ENCODE measurements at regions of chr11 and their contacts with region 1.

Region 1: DNA sequence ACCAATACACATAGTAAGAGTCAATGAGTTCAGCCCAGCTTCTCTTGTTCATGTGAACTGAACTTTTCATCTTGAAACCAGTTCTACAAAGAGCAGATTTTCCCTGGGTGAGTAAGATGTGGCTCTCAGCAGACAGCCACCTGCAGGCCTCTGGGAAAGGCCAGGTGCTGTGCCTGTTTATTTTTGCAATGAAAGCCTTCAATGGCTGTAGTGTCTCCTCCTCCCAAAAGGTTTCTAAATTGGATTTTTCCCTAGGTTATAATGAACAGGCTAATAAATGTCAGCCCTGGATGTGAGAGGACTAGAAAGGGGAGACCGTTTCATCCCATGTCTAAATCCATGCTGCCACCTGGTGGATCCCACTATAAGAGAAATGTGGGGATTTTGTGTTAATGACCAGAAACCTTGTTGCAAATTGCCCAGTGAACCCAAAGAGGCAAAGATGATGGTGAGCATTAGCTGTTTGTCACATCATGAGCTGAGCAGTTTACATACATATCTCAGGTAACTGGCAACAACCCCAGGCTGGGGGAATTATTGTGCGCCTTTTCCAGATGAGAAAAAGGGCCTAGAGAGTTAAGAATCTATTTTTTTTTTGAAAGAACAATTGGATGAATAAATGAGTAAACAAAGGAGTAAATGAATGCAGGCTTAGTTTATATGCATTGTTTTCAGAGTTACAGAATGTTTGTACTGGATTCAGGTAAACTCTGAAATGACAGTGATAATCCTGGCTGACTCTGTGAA is 12.7 kb downstream of the C11orf91 start:
- DNase-seq: peak in 5 of 10 donors; percentile 53 to 77 (median 64)
- H3K4me3 ChIP-seq: no peak overlapping the region
- H3K27ac ChIP-seq: no peak overlapping the region
- H3K27me3 ChIP-seq: no peaks in the 10 kb centered on the region
- CTCF ChIP-seq: peak; percentile 41 to 94 (median 81)

Region 2: DNA sequence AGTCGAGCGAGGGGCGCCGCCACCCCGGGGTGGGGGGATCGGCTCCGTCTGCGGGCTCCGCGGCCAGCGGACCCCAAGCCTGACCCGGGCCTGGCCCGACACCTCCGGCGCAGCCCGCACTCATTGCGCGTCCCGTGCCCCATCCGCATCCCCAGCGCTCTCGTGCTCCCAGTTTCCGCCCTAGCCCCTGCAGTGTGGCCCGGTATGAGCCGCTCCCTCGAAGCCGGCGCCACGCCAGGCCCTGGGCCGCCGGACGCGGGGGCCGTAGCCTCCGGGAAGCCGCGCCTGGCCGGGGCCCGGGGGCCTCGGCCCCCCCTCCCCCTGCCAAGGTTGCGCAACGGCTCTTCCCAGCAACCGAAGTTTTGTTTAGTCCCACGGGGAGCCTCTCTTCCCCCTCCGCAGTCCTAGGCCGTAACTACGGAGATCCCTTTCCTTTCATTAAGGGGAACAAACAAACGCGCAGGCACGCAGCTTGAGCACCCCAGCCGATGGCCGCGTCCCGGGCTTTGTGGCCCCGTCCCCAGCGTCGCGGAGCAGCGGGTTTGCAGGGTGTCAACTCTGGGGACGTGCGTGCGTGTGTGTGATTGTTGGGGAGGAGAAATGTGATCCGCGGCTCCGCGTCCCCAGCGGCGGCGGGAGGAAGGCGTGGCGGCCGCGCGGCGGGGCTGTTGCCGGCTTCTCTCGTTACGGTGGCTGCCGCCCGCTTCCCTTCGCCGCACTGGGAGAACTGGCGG is 429.8 kb before region 1 on chr11:
- intact Hi-C with region 1: loop called in 1 of 2 experiments (anchors 10 kb)
- DNase-seq: peak; percentile 52 to 82 (median 71)
- H3K4me3 ChIP-seq: peak overlapping the region; percentile 59 to 95 (median 86)
- H3K27ac ChIP-seq: peak overlapping the region; percentile 94 to 100 (median 100)
- H3K27me3 ChIP-seq: no peaks in the 10 kb centered on the region
- CTCF ChIP-seq: peak in 48 of 56 donors; percentile 0 to 58 (median 40)

Region 3: DNA sequence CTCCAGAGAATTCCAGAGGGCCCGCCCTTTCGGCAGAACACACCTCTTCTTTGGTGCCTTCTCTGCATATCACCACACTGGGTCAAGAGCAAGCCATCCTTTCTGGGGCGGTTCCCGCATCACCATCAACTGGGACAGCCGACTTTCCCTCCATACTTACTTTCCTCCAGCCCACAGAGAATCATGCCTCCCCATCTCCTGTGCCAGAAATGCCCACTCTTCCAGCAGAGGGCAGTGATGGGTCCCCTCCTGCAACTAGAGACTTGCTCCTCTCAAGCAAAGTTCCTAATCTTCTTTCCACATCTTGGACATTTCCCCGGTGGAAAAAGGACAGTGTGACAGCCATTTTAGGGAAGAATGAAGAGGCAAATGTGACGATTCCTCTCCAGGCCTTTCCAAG is 145.0 kb before region 1 on chr11:
- intact Hi-C with region 1: loop called (anchors 5 to 10 kb)
- DNase-seq: peak in 9 of 10 donors; percentile 41 to 71 (median 60)
- H3K4me3 ChIP-seq: no peak overlapping the region
- H3K27ac ChIP-seq: peak overlapping the region in 16 of 59 donors; percentile 0 to 66 (median 24)
- H3K27me3 ChIP-seq: no peaks in the 10 kb centered on the region
- CTCF ChIP-seq: peak; percentile 25 to 75 (median 61)

Region 4: GRCh38 chr11:33655842-33656600 is 31.9 kb before region 1 on chr11:
- intact Hi-C with region 1: no loop called
- DNase-seq: no peak
- H3K4me3 ChIP-seq: no peak overlapping the region
- H3K27ac ChIP-seq: no peak overlapping the region
- H3K27me3 ChIP-seq: no peaks in the 10 kb centered on the region
- CTCF ChIP-seq: no peak

Region 5: DNA sequence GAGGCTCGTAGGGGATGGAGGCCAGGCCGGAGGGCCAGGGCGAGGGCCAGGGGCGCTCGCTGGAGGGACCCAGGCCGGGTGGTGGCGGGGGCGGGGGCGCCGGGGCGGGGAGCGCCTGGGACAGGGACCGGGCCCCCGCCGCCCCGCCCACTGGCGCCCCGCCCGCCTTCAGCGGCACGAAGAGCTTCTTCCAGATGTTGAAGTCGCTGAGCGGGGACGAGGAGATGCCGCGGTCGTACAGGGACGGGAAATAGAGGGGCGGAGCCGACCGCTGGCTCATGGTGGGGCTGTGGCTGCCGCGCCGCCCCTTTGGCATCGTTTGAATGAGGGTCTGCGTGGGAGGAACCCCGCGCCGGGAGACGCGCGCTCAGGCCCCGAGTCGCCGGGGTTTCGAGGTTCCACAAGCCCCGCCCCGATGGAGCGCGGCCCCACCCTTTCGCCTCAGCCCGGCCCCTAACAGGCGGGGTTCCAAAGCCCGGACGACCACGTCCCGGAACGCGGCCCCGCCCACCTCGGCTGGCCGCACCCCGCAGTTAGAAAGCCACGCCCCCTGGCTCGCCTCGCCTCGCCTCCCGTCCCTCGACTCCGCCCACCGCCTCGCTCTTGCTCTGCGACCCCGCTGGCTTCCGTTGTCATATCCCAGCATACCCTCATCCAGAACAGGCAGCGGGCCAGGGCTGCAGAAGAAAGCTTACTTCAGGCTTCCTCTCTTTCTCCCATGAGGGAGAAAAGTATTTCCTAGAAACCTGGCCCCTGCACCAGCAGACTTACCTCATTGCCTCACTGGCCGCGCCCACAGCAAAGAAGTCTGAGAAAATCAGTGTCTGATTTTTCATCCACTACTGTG is 12.7 kb after region 1 on chr11 and contains the start of gene C11orf91:
- intact Hi-C with region 1: loop called in 1 of 2 experiments (anchors 1 kb)
- DNase-seq: peak; percentile 81 to 98 (median 92)
- H3K4me3 ChIP-seq: peak within 1 kb of the TSS; percentile 51 to 83 (median 71)
- H3K27ac ChIP-seq: peak within 1 kb of the TSS; percentile 7 to 90 (median 79)
- H3K27me3 ChIP-seq: no peaks in the 10 kb centered on the region
- CTCF ChIP-seq: peak in 11 of 56 donors; percentile 5 to 33 (median 14)
- total RNA-seq, gene C11orf91: 0.50 to 1.8 (median 0.85) TPM in 26 of 120 experiments, not detected in the others